Mammary epithelial cell (primary cell): ENCODE measurements at regions of chr3 and their contacts with region 1.

Region 1: GRCh38 chr3:107522510-107523288 is at the start of gene BBX:
- DNase-seq: peak; percentile 98
- H3K4me3 ChIP-seq: peak within 1 kb of the TSS; percentile 78 to 91 (median 80)
- H3K27ac ChIP-seq: peak within 1 kb of the TSS; percentile 84
- H3K4me1 ChIP-seq: peaks cover 17% of the 10 kb centered on the region
- H3K27me3 ChIP-seq: no peaks in the 10 kb centered on the region
- CTCF ChIP-seq: no peak
- total RNA-seq, gene BBX: 62.9 to 89.2 TPM

Region 2: DNA sequence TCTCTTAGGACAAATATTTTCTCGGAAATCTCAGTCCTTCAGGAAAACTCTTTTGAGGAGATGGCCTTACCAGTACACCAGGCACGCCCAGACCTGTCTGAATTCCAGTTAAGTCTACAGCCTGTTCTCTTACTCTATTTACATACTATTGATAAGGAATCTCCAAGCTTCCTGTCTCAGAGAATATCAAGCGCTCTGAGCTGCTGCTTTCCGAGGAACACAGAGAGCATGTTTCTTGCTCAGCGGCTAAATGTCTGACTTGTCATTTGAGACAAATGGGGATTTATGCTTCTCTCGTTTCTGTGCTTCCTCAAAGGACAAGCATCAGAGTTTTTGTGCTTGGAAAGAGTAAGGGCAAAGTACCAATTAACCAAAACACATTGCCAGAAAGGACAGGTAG is 257.8 kb before region 1 on chr3:
- CTCF ChIA-PET with region 1: interaction called, 34 read pairs
- dilution Hi-C with region 1: no loop called
- in situ Hi-C with region 1: loop called in 1 of 2 experiments (anchors 25 kb)
- intact Hi-C with region 1: loop called (anchors 2 kb)
- DNase-seq: peak; percentile 60
- H3K4me3 ChIP-seq: peak overlapping the region; percentile 1 to 31 (median 20)
- H3K27ac ChIP-seq: peak overlapping the region; percentile 61
- H3K4me1 ChIP-seq: peaks cover 22% of the 10 kb centered on the region
- H3K27me3 ChIP-seq: no peaks in the 10 kb centered on the region
- CTCF ChIP-seq: no peak

Region 3: DNA sequence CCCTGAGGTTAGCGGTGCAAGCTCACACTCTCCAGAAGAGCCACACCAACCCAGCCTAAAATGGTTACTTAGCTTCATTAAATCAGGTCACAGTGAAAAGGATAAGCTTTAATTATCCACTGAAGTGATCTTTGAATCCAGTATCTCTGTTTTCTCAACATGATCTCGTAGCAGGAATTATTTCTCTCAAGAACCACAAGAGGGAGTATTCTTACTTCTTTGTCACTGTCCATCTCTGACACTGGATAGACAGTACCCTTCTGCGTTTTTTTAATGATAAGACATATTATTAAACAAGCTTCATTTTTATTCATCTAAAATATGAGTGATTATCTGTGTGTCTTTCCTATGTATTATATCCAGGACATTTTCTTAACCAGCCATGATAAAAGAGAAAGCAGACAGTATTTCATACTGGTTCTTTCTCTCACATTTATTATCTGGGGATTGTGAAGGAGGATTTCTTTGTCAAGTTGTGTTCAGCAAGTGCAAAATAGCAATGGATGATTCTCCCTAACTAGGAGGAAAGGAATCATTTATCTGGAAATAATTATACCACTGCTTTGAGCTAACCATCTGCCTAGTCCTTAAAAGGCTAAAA is 250.8 kb before region 1 on chr3:
- CTCF ChIA-PET with region 1: interaction called, 7 read pairs
- dilution Hi-C with region 1: no loop called
- in situ Hi-C with region 1: loop called in 1 of 2 experiments (anchors 25 kb)
- intact Hi-C with region 1: loop called (anchors 2 kb)
- DNase-seq: peak; percentile 35
- H3K4me3 ChIP-seq: no peak overlapping the region
- H3K27ac ChIP-seq: no peak overlapping the region
- H3K4me1 ChIP-seq: no peaks in the 10 kb centered on the region
- H3K27me3 ChIP-seq: no peaks in the 10 kb centered on the region
- CTCF ChIP-seq: peak; percentile 64 to 69

Region 4: DNA sequence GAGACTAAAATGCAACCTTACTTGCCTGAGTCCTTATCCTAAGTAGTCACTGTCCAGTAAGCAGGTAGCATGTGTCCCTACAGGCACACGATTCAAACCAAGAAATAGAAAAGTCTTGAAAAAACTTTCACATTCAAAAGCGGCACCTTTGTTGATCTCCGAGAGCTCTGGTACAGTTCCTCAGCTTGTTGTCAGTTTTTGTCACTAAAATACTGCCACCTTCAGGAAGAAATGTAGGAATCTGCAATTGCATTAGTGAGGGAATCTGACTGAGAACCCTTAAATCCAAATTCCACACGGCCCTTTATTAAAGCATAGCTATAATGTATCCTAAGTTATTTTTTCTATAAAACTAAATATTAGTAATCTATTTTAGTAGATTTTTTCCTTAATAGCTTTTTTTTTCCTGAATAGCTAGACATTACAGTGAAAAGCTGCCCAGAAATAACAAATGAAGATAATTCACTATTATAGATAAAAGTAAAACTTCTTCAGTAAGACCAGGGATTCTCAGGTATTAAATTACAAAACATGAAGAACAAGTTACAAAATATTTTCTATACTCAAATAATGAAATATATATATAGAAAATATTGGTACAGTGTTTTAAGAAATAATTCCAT is 101.4 kb before region 1 on chr3:
- CTCF ChIA-PET with region 1: no interaction called
- dilution Hi-C with region 1: no loop called
- in situ Hi-C with region 1: no loop called
- intact Hi-C with region 1: loop called (anchors 2 kb)
- DNase-seq: peak; percentile 66
- H3K4me3 ChIP-seq: peak overlapping the region in 2 of 3 experiments; percentile 22 to 31
- H3K27ac ChIP-seq: no peak overlapping the region
- H3K4me1 ChIP-seq: peaks cover 5% of the 10 kb centered on the region
- H3K27me3 ChIP-seq: no peaks in the 10 kb centered on the region
- CTCF ChIP-seq: peak; percentile 56 to 70

Region 5: DNA sequence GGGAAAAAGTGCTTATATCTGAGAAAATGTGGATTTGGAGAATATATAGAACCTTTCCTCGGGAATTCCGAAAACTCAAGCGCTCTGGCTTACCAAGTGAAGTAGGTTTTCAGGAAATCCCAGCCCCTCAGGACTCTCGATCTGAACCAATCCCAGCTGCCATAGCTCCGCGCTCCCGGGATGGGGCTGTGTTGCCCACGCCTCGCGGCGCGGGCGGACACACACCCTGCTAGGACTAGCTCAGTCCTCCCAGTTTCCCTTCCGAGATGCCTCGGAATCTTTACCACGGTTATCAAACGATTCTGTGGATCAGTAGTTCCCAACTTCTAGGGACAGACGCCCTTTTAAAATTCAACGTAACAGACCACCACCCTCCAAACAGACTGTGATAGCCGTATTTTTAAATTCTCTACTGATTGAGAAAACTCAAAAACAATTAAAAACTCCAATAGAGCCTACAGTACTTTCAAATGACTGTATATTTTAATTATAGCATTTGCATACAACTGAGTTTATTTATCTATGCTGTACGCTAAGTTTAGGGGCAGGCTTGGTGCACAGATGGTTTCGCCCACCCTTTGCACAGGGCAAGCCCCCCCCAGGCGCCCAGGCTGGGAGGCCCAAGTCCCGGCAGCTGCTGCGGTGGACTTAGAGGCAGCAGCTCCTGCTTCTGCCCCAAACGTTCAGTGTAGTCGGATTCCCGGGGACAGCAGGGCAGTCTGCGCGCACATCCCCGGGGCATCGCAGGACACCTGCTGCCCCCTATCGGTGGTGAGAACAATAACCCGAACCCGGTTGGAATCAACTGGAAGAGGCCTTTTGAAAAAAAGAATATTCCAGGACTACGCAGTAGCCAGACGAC is 93.1 kb before region 1 on chr3:
- CTCF ChIA-PET with region 1: interaction called, 11 read pairs
- dilution Hi-C with region 1: no loop called
- in situ Hi-C with region 1: loop called in 1 of 2 experiments (anchors 10 kb)
- intact Hi-C with region 1: loop called (anchors 1 kb)
- DNase-seq: peak; percentile 75
- H3K4me3 ChIP-seq: peak overlapping the region; percentile 38 to 44 (median 38)
- H3K27ac ChIP-seq: no peak overlapping the region
- H3K4me1 ChIP-seq: peaks cover 32% of the 10 kb centered on the region
- H3K27me3 ChIP-seq: no peaks in the 10 kb centered on the region
- CTCF ChIP-seq: peak; percentile 63 to 91

Region 6: DNA sequence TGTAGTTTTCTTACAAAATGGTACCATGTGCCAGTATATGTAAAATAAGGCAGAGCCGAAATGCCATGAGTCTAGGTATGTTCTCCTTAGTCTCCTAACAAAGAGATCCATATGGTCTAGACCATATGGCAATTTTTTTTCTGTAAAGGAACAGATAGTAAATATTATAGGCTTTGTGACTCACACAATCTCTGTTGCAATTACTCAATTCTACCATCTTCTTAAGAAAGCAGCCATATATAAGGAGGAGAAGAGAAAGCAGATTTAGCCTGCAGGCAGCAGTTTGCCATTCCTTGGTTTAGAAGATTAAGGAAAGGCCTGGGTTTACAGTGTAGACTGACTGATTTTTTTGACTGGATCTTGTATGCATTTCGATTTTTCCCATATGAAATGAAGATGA is 16.2 kb before region 1 on chr3:
- CTCF ChIA-PET with region 1: no interaction called
- dilution Hi-C with region 1: no loop called
- in situ Hi-C with region 1: no loop called
- intact Hi-C with region 1: no loop called
- DNase-seq: peak; percentile 12
- H3K4me3 ChIP-seq: no peak overlapping the region
- H3K27ac ChIP-seq: no peak overlapping the region
- H3K4me1 ChIP-seq: peaks cover 3% of the 10 kb centered on the region
- H3K27me3 ChIP-seq: no peaks in the 10 kb centered on the region
- CTCF ChIP-seq: no peak

Region 7: DNA sequence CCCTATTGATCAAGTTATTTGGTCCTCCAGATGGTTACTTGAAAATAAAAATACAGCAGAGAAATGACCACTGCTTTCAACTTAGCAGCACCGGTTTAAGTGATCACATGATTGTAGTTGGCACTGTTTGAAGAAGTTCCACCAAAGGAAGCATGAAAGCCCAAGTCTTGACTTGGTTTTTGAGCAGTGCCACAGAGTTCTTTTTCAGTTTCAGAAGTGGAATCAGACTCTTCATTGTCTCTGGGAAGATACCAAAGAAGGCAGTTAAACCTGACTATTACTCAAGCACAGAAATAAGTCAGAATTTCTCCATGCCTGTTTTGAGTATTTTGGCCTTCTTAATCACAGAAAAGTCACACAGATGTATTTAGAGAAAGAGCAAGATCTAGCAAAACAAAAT is 66.8 kb after region 1 on chr3:
- CTCF ChIA-PET with region 1: no interaction called
- dilution Hi-C with region 1: no loop called
- in situ Hi-C with region 1: no loop called
- intact Hi-C with region 1: loop called (anchors 10 kb)
- DNase-seq: no peak
- H3K4me3 ChIP-seq: no peak overlapping the region
- H3K27ac ChIP-seq: no peak overlapping the region
- H3K4me1 ChIP-seq: no peaks in the 10 kb centered on the region
- H3K27me3 ChIP-seq: no peaks in the 10 kb centered on the region
- CTCF ChIP-seq: no peak

Region 8: GRCh38 chr3:107680698-107681097 is 158.0 kb after region 1 on chr3:
- CTCF ChIA-PET with region 1: no interaction called
- dilution Hi-C with region 1: no loop called
- in situ Hi-C with region 1: no loop called
- intact Hi-C with region 1: no loop called
- DNase-seq: no peak
- H3K4me3 ChIP-seq: no peak overlapping the region
- H3K27ac ChIP-seq: no peak overlapping the region
- H3K4me1 ChIP-seq: no peaks in the 10 kb centered on the region
- H3K27me3 ChIP-seq: no peaks in the 10 kb centered on the region
- CTCF ChIP-seq: no peak